Activated T-helper 1 cell treated with anti-CD3 and anti-CD28 coated beads, Interleukin-12 subunit alpha, Interleukin-12 subunit beta, Interleukin-2, Interleukin-4 antibody, amounts not matched to agents 30 ng/mL and 10 ng/mL and 1 ng/mL, durations not matched to agents 14 hours and 24 hours and 36 hours (primary cell): ENCODE measurements at regions of chr7 and their contacts with region 1.

Region 1: GRCh38 chr7:100852048-100852872 is at the start of gene SLC12A9:
- DNase-seq: peak; percentile 86
- H3K4me3 Mint-ChIP-seq: peak within 1 kb of the TSS; percentile 93
- H3K27ac Mint-ChIP-seq: peak within 1 kb of the TSS; percentile 79
- H3K4me1 Mint-ChIP-seq: peaks cover 8% of the 10 kb centered on the region
- H3K27me3 Mint-ChIP-seq: peaks cover 5% of the 10 kb centered on the region
- total RNA-seq, gene SLC12A9: 46.0 and 47.9 TPM in 2 replicates

Region 2: GRCh38 chr7:100366411-100367238 is 485.6 kb before region 1 on chr7:
- intact Hi-C with region 1: no loop called
- DNase-seq: no peak
- H3K4me3 Mint-ChIP-seq: no peak overlapping the region
- H3K27ac Mint-ChIP-seq: peak overlapping the region; percentile 63
- H3K4me1 Mint-ChIP-seq: peaks cover 46% of the 10 kb centered on the region
- H3K27me3 Mint-ChIP-seq: no peaks in the 10 kb centered on the region

Region 3: DNA sequence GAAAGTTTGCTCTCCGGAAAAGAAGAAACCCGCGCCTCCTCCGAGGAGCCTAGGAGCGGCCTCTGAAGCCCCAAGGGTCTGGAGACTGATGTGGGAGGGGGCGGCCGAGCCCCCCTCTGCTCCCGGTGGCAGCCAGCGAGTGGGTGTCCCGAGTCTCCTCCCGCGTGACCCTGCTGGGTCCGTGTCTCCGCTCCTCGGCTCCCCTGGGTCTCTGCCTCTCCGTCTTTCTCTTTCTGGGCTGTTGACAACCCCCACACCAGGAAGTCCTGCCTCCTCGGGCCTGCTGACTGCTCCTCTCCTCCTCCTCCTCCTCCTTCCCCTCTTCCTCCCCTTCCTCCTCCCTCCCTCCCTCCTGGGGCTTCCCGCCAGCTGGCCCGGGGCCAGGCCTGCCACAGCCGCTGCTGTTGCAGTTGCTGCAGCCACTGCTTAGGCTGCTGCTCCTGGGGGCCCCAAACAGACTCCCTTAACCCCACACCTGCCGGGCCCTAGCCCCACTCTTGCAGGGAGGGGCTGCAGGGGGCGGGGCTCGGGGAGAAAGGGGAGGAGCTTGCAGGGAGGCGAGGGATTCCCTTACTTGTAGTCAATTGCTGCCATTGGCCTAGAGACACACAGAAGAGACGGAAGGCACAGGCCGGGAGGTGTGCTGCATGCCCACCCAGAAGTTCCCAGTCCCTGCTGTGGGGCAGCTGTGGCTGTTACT is 373.1 kb before region 1 on chr7 and contains the start of gene TSC22D4:
- intact Hi-C with region 1: loop called (anchors 2 kb)
- DNase-seq: peak; percentile 85
- H3K4me3 Mint-ChIP-seq: peak within 1 kb of the TSS; percentile 99
- H3K27ac Mint-ChIP-seq: peak within 1 kb of the TSS; percentile 93
- H3K4me1 Mint-ChIP-seq: peaks cover 35% of the 10 kb centered on the region
- H3K27me3 Mint-ChIP-seq: peaks cover 6% of the 10 kb centered on the region
- total RNA-seq, gene TSC22D4: 126 and 134 TPM in 2 replicates

Region 4: GRCh38 chr7:100604028-100604975 is 248.0 kb before region 1 on chr7:
- intact Hi-C with region 1: loop called (anchors 2 kb)
- DNase-seq: peak; percentile 61
- H3K4me3 Mint-ChIP-seq: peak overlapping the region; percentile 81
- H3K27ac Mint-ChIP-seq: peak overlapping the region; percentile 84
- H3K4me1 Mint-ChIP-seq: peaks cover 15% of the 10 kb centered on the region
- H3K27me3 Mint-ChIP-seq: peaks cover 13% of the 10 kb centered on the region

Region 5: GRCh38 chr7:100691676-100692577 is 160.3 kb before region 1 on chr7:
- intact Hi-C with region 1: loop called (anchors 5 kb)
- DNase-seq: peak; percentile 74
- H3K4me3 Mint-ChIP-seq: peak overlapping the region; percentile 94
- H3K27ac Mint-ChIP-seq: peak overlapping the region; percentile 45
- H3K4me1 Mint-ChIP-seq: peaks cover 27% of the 10 kb centered on the region
- H3K27me3 Mint-ChIP-seq: peaks cover 16% of the 10 kb centered on the region

Region 6: GRCh38 chr7:100837099-100837836 is 15.0 kb before region 1 on chr7:
- intact Hi-C with region 1: loop called (anchors 2 kb)
- DNase-seq: peak; percentile 54
- H3K4me3 Mint-ChIP-seq: peak overlapping the region; percentile 79
- H3K27ac Mint-ChIP-seq: peak overlapping the region; percentile 44
- H3K4me1 Mint-ChIP-seq: no peaks in the 10 kb centered on the region
- H3K27me3 Mint-ChIP-seq: peaks cover 3% of the 10 kb centered on the region

Region 7: DNA sequence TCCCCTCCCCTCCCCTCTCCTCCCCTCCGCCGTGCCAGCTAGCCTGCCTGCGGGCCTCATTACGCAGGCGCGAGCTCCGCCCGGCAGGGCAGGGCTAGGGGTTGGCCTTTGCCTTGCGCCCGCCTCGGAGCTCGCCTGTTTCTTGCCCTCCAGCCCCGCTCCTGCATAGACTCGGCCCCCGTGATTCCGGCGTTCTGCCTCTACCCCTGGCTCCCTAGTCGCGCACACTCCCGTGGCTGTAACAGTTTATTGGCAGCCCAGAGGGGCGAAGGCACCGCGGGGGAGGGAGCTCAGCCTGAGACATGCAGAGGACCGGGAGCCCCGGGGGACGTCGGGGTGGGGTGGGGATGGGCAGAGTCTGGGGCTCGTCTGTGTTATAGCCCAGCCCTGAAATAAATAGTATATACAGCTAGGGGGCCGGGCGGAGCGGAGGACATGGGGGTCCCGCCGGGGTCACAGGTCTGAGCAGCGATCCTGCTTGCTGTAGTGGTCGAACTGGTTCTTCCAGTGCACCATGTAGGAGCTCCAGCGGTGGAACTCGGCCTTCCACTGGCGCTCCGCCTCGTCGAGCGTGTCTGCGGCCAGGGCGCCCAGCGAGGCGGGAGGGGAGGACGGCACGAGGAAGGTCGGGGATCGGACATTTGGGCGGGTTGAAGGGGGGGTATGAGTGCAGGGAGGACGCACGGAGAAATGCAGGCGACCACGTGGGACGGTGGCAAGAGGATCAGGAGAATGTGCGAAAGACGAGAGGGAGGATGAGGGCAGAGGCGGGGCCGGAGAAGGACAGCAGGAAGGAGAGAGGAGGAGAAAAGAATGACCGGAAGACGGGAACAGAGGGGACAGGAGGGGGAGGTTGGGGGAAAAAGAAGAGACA is 37.7 kb after region 1 on chr7:
- intact Hi-C with region 1: loop called (anchors 1 kb)
- DNase-seq: peak; percentile 91
- H3K4me3 Mint-ChIP-seq: peak overlapping the region; percentile 82
- H3K27ac Mint-ChIP-seq: peak overlapping the region; percentile 67
- H3K4me1 Mint-ChIP-seq: peaks cover 42% of the 10 kb centered on the region
- H3K27me3 Mint-ChIP-seq: peaks cover 23% of the 10 kb centered on the region

Region 8: DNA sequence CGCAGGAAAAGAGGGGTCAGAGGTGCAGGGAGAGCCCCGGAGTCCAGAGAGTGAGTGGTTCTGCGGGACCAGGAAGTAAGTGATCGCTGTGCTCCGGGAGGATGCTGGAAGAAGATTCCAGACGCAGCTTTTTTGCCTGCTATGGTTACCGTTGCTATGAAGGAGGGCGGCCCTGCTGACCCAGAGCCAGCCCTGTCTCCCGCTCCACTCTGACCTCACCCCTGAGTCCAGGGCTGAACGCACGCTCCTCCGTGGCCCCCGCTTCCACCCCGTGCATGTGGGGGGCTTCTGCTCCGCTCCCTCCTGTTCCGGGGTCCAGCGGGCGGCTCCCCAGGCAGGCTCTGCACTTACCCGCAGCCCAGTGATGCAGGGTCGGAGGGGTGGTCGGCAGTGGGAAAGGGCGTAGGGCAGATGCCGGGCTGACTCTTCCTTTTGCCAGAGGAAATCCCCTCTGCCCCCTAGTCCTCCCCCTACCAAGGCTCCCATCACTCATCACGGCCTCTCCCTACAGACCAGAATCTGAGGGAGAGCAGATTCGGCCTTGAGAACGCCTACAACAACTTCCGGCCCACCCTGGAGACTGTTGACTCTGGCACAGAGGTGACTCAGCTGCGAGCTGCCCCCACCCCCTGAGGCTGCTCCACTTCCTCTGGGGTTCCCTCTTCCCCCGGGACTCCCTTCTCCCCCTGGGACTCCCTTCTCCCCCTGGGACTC is 165.0 kb after region 1 on chr7:
- intact Hi-C with region 1: no loop called
- DNase-seq: peak; percentile 65
- H3K4me3 Mint-ChIP-seq: peak overlapping the region; percentile 85
- H3K27ac Mint-ChIP-seq: peak overlapping the region; percentile 88
- H3K4me1 Mint-ChIP-seq: peaks cover 21% of the 10 kb centered on the region
- H3K27me3 Mint-ChIP-seq: peaks cover 14% of the 10 kb centered on the region